ENCODE measurements at regions of chr12 and their contacts with region 1.

Region 1: DNA sequence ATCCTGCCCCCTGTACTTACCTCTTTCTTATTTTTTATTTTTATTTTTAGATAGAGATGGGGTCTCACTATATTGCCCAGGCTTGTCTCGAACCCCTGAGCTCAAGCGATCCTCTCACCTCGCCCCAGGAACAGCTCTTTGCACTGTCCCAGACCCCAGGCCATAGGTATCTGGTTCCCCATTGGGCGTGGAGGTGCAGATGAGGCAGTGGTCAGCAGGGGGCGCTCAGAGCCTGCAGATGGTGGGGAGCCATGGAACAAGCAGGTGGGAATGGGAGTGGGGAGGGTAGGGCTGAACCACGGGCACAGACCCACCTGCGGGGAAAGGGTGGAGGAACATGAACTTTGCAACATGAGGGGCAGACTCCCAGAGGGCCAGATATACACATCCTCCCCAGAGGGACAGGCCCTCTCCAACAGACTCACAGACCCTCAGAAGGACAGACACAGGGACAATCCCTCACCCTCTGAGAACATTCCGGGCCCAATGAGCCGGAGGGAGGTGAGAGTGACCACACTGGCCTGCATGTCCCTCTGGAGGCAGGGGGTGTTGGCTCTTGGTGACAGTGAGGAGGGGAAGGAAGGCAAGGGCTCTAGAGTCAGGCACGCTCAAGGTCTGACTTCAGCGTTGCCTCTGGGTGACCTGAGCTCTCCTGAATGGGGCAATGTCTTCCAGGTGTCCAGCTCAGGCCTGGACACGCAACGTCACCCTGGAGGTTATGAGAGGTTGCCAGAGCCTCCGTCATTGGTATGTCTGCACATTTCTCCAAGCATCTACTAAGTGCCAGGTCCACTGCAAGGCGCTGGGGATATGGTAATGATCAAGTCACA is 34.9 kb downstream of the KRT80 start:
- DNase-seq: peak; percentile 74 to 86 (median 83)
- ATAC-seq: peak; percentile 75
- H3K4me3 ChIP-seq: no peak overlapping the region
- H3K27ac ChIP-seq: no peak overlapping the region
- H3K4me1 ChIP-seq: peaks cover 7% of the 10 kb centered on the region
- H3K27me3 ChIP-seq: no peaks in the 10 kb centered on the region
- CTCF ChIP-seq: peak; percentile 86 to 97 (median 94)
- POLR2A ChIP-seq: no peak

Region 2: DNA sequence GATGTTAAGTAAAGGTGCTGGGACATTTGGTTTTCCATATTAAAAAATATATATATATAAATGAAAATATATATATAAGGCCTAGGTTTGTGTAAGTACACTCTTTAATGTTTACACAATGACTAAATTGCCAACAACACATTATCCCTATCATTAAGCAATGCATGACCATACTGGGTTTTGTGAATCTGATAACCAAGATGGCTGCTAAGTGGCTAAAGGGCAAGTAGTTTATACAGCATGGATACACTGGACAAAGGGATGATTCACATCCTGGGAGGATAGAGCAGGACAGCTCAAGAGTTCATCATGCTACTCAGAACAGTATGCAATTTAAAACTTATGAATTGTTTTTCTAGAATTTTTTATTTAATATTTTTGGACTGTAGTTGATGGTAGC is 397.8 kb before region 1 on chr12:
- intact Hi-C with region 1: no loop called
- DNase-seq: no peak
- ATAC-seq: no peak
- H3K4me3 ChIP-seq: no peak overlapping the region
- H3K27ac ChIP-seq: no peak overlapping the region
- H3K4me1 ChIP-seq: no peaks in the 10 kb centered on the region
- H3K27me3 ChIP-seq: no peaks in the 10 kb centered on the region
- CTCF ChIP-seq: no peak
- POLR2A ChIP-seq: no peak

Region 3: GRCh38 chr12:52230327-52231291 is 73.7 kb after region 1 on chr12:
- intact Hi-C with region 1: no loop called
- DNase-seq: peak in 3 of 4 donors; percentile 64 to 75 (median 66)
- ATAC-seq: peak; percentile 67
- H3K4me3 ChIP-seq: no peak overlapping the region
- H3K27ac ChIP-seq: peak overlapping the region; percentile 67 to 80 (median 71)
- H3K4me1 ChIP-seq: peaks cover 57% of the 10 kb centered on the region
- H3K27me3 ChIP-seq: no peaks in the 10 kb centered on the region
- CTCF ChIP-seq: no peak
- POLR2A ChIP-seq: no peak

Region 4: GRCh38 chr12:52321418-52321817 is 164.5 kb after region 1 on chr12:
- intact Hi-C with region 1: loop called (anchors 5 kb)
- DNase-seq: no peak
- ATAC-seq: no peak
- H3K4me3 ChIP-seq: no peak overlapping the region
- H3K27ac ChIP-seq: no peak overlapping the region
- H3K4me1 ChIP-seq: no peaks in the 10 kb centered on the region
- H3K27me3 ChIP-seq: no peaks in the 10 kb centered on the region
- CTCF ChIP-seq: no peak
- POLR2A ChIP-seq: no peak

Region 5: GRCh38 chr12:52515927-52516831 is 359.2 kb after region 1 on chr12:
- intact Hi-C with region 1: loop called (anchors 10 kb)
- DNase-seq: no peak
- ATAC-seq: peak; percentile 45
- H3K4me3 ChIP-seq: no peak overlapping the region
- H3K27ac ChIP-seq: peak overlapping the region in 1 of 4 donors; percentile 28
- H3K4me1 ChIP-seq: peaks cover 8% of the 10 kb centered on the region
- H3K27me3 ChIP-seq: no peaks in the 10 kb centered on the region
- CTCF ChIP-seq: no peak
- POLR2A ChIP-seq: no peak

Region 6: GRCh38 chr12:52879394-52880351 is 722.7 kb after region 1 on chr12:
- intact Hi-C with region 1: loop called (anchors 5 kb)
- DNase-seq: peak; percentile 84 to 90 (median 87)
- ATAC-seq: peak; percentile 83
- H3K4me3 ChIP-seq: no peak overlapping the region
- H3K27ac ChIP-seq: peak overlapping the region in 3 of 4 donors; percentile 38 to 66 (median 52)
- H3K4me1 ChIP-seq: peaks cover 25% of the 10 kb centered on the region
- H3K27me3 ChIP-seq: no peaks in the 10 kb centered on the region
- CTCF ChIP-seq: peak; percentile 47 to 94 (median 80)
- POLR2A ChIP-seq: peak in 1 of 3 donors; percentile 31